ENCODE measurements at regions of chr14 and their contacts with region 1.

Region 1: DNA sequence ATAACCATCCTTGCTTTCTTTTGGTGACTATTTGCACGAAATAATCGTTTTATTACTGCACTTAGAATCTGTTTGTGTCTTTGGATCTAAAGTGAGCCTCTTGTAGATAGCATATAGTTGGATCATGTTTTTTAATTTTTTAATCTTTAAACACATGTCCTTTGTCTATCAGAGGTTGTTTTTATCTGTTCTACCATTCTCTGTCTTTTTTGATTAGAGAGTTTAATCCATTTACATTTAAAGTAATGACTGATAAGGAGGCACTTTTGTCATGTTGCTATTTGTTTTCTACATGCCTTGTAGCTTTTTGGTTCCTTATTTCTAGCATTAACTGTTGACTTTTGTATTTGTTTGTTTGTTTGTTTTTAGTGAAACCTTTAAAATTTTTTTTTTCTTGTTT is 506.2 kb upstream of the RGS6 start:
- DNase-seq: no peak
- ATAC-seq: no peak
- H3K4me3 ChIP-seq: no peak overlapping the region
- H3K27ac ChIP-seq: no peak overlapping the region
- H3K4me1 ChIP-seq: no peaks in the 10 kb centered on the region
- H3K27me3 ChIP-seq: no peaks in the 10 kb centered on the region
- CTCF ChIP-seq: no peak

Region 2: GRCh38 chr14:71371711-71372396 is 54.1 kb before region 1 on chr14:
- intact Hi-C with region 1: no loop called
- DNase-seq: no peak
- ATAC-seq: no peak
- H3K4me3 ChIP-seq: no peak overlapping the region
- H3K27ac ChIP-seq: no peak overlapping the region
- H3K4me1 ChIP-seq: no peaks in the 10 kb centered on the region
- H3K27me3 ChIP-seq: no peaks in the 10 kb centered on the region
- CTCF ChIP-seq: no peak

Region 3: DNA sequence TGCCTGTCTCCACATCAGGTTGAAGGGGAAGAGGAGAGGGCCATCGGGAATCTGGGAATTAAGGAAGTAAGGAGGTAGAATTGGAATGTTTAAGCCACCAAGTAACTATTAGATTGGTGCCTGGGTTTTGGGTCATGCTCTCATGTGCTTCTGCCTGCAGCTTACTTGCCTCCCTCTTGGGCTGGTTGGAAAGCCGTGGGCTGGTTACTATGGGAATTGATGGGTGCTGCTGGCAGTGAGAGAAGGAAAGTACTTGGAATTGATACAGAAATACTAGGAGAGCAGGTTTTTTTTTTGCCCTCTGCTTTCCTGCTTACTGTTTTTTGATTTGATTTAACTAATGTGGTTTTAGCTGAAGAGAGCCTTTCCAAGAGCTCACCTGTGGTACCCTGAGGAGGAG is 12.7 kb after region 1 on chr14:
- intact Hi-C with region 1: loop called in 1 of 2 experiments (anchors 1 kb)
- DNase-seq: no peak
- ATAC-seq: no peak
- H3K4me3 ChIP-seq: no peak overlapping the region
- H3K27ac ChIP-seq: no peak overlapping the region
- H3K4me1 ChIP-seq: no peaks in the 10 kb centered on the region
- H3K27me3 ChIP-seq: no peaks in the 10 kb centered on the region
- CTCF ChIP-seq: no peak